Activated CD8-positive, alpha-beta memory T cell treated with anti-CD3 and anti-CD28 coated beads, Interleukin-2, amount 10 ng/mL, durations not matched to agents 7 days and 5 days (primary cell): ENCODE measurements at regions of chr20 and their contacts with region 1.

Region 1: GRCh38 chr20:50165684-50166554 is 12.4 kb upstream of the PEDS1 start:
- DNase-seq: peak; percentile 92
- ATAC-seq: peak; percentile 99
- H3K4me3 Mint-ChIP-seq: peak overlapping the region; percentile 76
- H3K27ac Mint-ChIP-seq: peak overlapping the region; percentile 83
- H3K4me1 Mint-ChIP-seq: peaks cover 15% of the 10 kb centered on the region
- H3K27me3 Mint-ChIP-seq: peaks cover 3% of the 10 kb centered on the region

Region 2: DNA sequence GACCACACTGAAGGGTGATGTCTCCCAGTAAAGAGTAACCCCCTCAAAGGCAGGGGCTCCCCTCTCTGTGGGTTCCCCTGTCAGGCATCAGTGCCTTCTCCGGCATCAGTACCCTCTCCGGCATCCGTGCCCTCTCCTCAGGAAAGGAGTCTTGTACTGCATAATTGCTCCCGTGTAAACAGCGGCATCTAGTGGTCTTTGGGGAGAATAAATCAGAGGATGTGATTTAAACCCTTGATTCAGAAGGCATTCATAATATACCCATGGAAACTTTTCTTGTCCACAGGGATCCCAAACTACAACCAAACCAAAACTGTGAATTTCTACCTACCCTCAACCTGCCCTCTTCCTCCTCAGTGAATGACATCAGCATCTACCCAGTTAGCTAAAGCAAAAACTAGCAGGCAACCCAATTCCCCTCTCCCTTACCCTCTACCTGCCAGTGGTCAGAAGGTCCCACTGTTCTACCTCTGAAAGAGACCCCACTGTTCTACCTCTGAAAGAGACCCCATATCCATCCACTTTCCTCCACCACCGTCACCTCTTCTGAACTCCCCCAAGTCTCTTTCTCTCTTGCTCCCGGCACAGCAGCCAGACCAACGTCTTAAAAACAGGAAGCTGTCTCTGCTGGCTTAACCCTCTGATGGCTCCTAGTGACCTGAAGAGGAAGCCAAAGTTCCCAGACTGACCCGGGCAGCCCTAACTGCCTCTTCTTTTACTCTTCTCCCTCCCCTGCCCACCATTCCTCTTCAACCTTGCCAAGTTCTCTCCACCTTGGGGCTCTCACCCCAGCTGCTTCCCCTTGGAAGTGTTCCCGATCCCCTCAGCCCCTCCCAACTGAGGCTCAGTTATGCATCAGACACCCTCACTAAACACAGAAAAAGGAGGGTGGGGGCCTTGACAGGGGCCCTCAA is 80.2 kb before region 1 on chr20:
- CTCF ChIA-PET with region 1: interaction called, 16 read pairs
- DNase-seq: peak; percentile 54
- ATAC-seq: peak; percentile 79
- H3K4me3 Mint-ChIP-seq: peak overlapping the region; percentile 11
- H3K27ac Mint-ChIP-seq: peak overlapping the region; percentile 81
- H3K4me1 Mint-ChIP-seq: peaks cover 26% of the 10 kb centered on the region
- H3K27me3 Mint-ChIP-seq: no peaks in the 10 kb centered on the region

Region 3: GRCh38 chr20:50115591-50116372 is 50.1 kb before region 1 on chr20:
- CTCF ChIA-PET with region 1: interaction called, 135 read pairs
- DNase-seq: peak; percentile 95
- ATAC-seq: peak; percentile 77
- H3K4me3 Mint-ChIP-seq: peak overlapping the region; percentile 82
- H3K27ac Mint-ChIP-seq: peak overlapping the region; percentile 86
- H3K4me1 Mint-ChIP-seq: peaks cover 44% of the 10 kb centered on the region
- H3K27me3 Mint-ChIP-seq: no peaks in the 10 kb centered on the region

Region 4: DNA sequence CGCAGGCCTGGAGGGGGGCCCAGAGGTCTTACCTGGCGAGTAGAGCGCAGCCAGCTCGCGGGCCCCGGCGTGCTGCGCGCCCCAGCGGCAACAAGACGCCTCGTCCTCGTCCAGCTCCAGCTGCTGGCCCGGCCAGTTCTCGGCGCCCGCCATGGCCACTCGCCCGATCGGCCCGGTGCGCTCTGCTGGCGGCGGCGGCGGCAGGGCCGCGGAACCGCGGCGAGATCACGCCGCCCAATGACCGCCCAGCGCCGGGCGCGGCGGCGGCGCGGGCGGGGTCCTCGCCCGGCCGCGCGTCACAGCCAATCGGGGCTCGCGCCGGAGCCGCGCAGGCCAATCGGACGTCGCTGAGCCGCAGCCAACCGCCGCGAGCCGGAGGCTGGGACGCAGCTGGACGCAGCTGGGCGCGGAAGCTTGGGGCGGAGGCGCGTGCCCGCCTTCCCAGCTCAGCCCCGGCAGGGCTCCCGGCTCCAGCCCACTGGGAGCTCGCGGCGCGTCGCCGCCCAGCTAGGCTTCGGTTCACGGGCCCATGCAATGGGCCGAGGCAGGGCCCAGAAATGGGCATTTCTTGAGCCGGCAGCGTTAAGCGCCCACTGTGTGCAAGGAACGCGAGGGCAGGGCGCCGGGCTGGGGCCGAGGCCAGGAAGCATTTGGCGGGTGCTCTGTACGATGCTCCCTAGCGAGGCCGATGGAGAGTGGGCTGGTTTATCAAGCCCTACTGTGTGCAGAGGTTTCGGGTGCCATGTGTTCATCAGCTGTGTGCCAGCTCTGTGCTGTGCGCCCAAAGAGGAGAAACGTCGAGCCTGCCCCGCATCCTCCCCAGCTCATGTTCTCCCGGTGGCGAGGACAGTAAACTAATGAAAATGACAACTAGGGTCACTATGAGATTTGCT is 12.2 kb before region 1 on chr20 and contains the start of gene PEDS1:
- CTCF ChIA-PET with region 1: interaction called, 67 read pairs
- DNase-seq: peak; percentile 90
- ATAC-seq: peak; percentile 98
- H3K4me3 Mint-ChIP-seq: peak within 1 kb of the TSS; percentile 89
- H3K27ac Mint-ChIP-seq: peak within 1 kb of the TSS; percentile 88
- H3K4me1 Mint-ChIP-seq: peaks cover 37% of the 10 kb centered on the region
- H3K27me3 Mint-ChIP-seq: no peaks in the 10 kb centered on the region
- total RNA-seq, gene PEDS1: 24.2 to 25.4 TPM

Region 5: DNA sequence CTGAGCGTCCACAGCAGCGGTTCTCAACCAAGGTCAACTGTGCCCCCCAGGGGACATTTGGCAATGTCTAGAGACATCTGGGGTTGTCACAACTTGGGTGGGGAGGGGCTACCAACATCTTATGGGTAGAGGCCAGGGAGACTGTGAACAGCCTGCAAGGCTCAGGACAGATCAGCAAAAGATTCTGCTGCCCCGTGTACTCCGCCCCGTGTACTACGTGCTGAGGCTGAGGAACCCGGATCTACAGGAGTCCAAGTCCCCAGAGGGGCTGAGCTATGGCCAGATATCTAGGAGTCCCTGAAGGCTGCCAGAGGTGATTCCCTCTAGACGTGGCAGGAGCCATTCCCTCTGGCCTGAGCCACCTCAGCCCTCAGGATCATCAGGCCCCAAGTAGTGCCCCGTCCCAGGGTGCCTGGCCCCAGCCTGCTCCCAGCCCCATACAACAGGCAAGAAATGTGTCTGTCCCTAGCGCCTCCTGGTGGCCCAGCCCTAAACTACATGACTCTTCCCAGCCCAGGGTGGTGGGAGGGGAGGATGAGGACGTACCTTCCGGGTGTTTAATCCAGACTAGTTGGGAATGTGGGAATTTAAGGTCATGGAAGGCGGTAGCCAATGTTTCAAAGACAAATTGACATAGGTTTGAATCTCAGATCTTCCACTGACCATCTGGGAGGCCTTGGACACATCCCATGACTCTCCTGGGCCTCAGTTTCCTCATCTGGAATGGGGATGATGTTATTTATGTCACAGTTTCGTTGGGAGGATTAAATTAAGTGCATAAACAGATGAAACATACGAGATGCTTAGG is 294.7 kb after region 1 on chr20:
- CTCF ChIA-PET with region 1: interaction called, 10 read pairs
- DNase-seq: peak; percentile 87
- ATAC-seq: peak; percentile 88
- H3K4me3 Mint-ChIP-seq: no peak overlapping the region
- H3K27ac Mint-ChIP-seq: no peak overlapping the region
- H3K4me1 Mint-ChIP-seq: peaks cover 24% of the 10 kb centered on the region
- H3K27me3 Mint-ChIP-seq: peaks cover 27% of the 10 kb centered on the region